Right ventricle myocardium inferior (tissue), 1 donor: ENCODE measurements at regions of chr18 and their contacts with region 1.

Region 1: DNA sequence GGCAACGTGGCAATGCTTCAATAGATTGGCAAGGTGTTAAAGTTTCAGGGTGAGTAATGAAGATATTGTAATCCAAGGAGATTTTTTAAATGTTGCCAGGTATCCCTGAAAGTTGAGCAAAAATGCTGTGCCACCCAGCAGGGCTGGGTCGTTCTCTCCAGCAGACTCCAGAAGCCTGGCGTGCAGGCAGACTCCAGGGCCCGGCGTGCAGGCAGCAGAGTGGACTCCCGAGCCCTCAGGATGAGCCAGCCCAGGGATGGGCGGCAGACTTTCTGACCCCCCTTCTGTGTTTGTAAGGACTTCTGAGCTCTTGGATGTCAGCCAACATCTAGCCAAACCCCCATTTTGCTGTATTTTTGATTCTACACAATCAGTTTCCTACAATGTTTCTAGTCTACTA is 289.1 kb downstream of the ZNF516 start:
- DNase-seq: no peak
- ATAC-seq: no peak

Region 2: DNA sequence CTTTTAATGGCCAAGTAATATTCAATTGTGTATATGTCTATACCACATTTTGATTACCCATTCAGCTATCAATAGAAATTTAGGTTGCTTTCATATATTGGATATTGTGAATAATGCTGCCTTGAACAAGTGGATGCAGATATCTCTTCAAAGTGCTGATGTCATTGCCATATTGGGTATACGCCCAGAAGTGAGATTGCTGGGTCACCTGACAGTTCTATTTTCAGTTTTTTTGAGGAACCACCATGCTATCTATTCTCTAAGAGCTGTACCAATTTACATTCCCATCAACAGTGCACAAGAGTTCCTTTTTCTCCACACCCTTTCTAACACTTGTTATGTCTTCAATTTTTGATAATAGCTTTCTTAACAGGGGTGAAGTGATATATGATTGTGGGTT is 17.8 kb before region 1 on chr18:
- intact Hi-C with region 1: loop called (anchors 2 kb)
- DNase-seq: no peak
- ATAC-seq: no peak